ENCODE measurements at regions of chr16 and their contacts with region 1.

Region 1: GRCh38 chr16:87877938-87878507 is 8.7 kb upstream of the SLC7A5 start:
- DNase-seq: peak; percentile 62
- H3K4me3 Mint-ChIP-seq: no peak overlapping the region
- H3K27ac Mint-ChIP-seq: no peak overlapping the region
- H3K4me1 Mint-ChIP-seq: peaks cover 25% of the 10 kb centered on the region
- H3K27me3 Mint-ChIP-seq: peaks cover 42% of the 10 kb centered on the region

Region 2: GRCh38 chr16:87834623-87835407 is 43.2 kb before region 1 on chr16:
- CTCF ChIA-PET with region 1: no interaction called
- DNase-seq: no peak
- H3K4me3 Mint-ChIP-seq: no peak overlapping the region
- H3K27ac Mint-ChIP-seq: no peak overlapping the region
- H3K4me1 Mint-ChIP-seq: peaks cover 5% of the 10 kb centered on the region
- H3K27me3 Mint-ChIP-seq: no peaks in the 10 kb centered on the region

Region 3: GRCh38 chr16:87895641-87896141 is 17.7 kb after region 1 on chr16:
- CTCF ChIA-PET with region 1: interaction called, 13 read pairs
- DNase-seq: peak; percentile 87
- H3K4me3 Mint-ChIP-seq: peak overlapping the region; percentile 36
- H3K27ac Mint-ChIP-seq: peak overlapping the region; percentile 95
- H3K4me1 Mint-ChIP-seq: peaks cover 57% of the 10 kb centered on the region
- H3K27me3 Mint-ChIP-seq: no peaks in the 10 kb centered on the region

Measured in activated naive CD4-positive, alpha-beta T cell treated with anti-CD3 and anti-CD28 coated beads, Interleukin-2, amount 10 ng/mL, durations not matched to agents 7 days and 5 days (primary cell).